Naive thymus-derived CD4-positive, alpha-beta T cell (primary cell): ENCODE measurements at regions of chr9 and their contacts with region 1.

Region 1: DNA sequence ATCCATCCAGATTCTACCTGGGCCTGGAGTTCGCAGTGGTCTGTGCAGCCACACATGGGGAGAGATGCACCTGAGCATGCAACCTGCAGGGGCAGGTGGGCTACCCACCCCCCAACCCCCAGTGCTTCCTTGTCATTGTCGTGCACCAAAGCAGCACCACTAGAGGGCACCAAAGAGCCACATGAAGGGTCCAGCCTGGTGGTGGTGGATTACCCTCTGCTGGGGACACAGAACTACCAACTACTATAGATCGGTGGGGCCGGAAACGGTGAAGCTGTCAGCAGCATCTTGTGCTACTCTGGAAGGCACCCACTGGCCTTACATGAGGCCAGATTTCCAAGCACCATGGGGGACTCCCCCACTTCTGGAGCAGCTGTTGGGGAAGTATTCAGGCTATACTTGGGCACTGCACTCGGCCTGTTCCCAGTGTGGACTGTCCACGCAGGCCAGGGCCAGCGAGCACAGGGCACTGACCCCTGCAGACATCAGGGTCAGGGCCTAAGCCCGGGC is 60.2 kb upstream of the TBC1D2 start:
- DNase-seq: peak; percentile 40 to 77 (median 65)
- ATAC-seq: peak; percentile 90
- H3K4me3 ChIP-seq: no peak overlapping the region
- H3K4me3 Mint-ChIP-seq: no peak overlapping the region
- H3K27ac ChIP-seq: no peak overlapping the region
- H3K27ac Mint-ChIP-seq: peak overlapping the region in 1 of 9 donors; percentile 7
- H3K4me1 ChIP-seq: no peaks in the 10 kb centered on the region
- H3K4me1 Mint-ChIP-seq: peaks cover 0 to 8% (median 0%) of the 10 kb centered on the region in 7 donors
- H3K27me3 ChIP-seq: no peaks in the 10 kb centered on the region
- H3K27me3 Mint-ChIP-seq: peaks cover 0 to 5% (median 0%) of the 10 kb centered on the region in 5 donors

Region 2: DNA sequence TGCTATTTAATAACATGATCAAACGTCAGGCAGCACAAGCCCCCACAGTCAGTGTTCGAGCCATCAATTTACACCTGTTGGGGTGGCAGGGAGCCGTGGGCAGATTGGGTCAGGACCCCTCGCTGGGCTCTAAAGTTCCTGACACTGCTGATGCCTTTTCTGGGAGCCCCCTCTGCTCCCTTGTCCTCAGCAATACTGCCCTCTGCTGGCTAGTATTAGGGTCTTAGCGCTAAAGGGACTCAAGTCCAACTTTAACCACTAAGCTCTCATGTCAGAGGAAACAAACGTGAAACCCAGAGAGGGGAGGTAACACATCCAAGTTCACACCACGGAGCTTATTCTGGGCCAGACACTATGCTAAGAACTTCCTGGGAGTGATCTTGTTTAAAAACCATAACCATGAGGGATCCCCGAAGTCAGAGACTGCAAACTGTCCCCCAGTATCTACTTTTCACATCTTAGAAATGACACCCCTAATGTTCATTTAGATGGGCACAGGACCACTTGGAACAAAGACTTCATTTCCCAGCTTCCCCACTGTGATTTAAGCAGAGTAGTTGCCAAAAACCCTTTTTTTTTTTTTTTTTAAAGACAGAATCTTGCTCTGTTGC is 460.3 kb after region 1 on chr9:
- CTCF ChIA-PET with region 1: interaction called, 6 read pairs
- POLR2A ChIA-PET with region 1: no interaction called
- intact Hi-C with region 1: loop called in 1 of 2 experiments (anchors 1 kb)
- DNase-seq: peak in 5 of 9 donors; percentile 9 to 31 (median 24)
- ATAC-seq: peak; percentile 53
- H3K4me3 ChIP-seq: no peak overlapping the region
- H3K4me3 Mint-ChIP-seq: no peak overlapping the region
- H3K27ac ChIP-seq: no peak overlapping the region
- H3K27ac Mint-ChIP-seq: no peak overlapping the region
- H3K4me1 ChIP-seq: no peaks in the 10 kb centered on the region
- H3K4me1 Mint-ChIP-seq: peaks cover 0 to 7% (median 0%) of the 10 kb centered on the region in 7 donors
- H3K27me3 ChIP-seq: no peaks in the 10 kb centered on the region
- H3K27me3 Mint-ChIP-seq: no peaks in the 10 kb centered on the region

Region 3: GRCh38 chr9:98791147-98792095 is 475.8 kb after region 1 on chr9:
- CTCF ChIA-PET with region 1: no interaction called
- POLR2A ChIA-PET with region 1: no interaction called
- intact Hi-C with region 1: loop called in 1 of 2 experiments (anchors 1 kb)
- DNase-seq: peak in 8 of 9 donors; percentile 24 to 74 (median 40)
- ATAC-seq: peak; percentile 88
- H3K4me3 ChIP-seq: no peak overlapping the region
- H3K4me3 Mint-ChIP-seq: peak overlapping the region in 2 of 10 donors; percentile 15 to 29
- H3K27ac ChIP-seq: no peak overlapping the region
- H3K27ac Mint-ChIP-seq: peak overlapping the region in 5 of 9 donors; percentile 5 to 56 (median 19)
- H3K4me1 ChIP-seq: peaks cover 6 to 16% of the 10 kb centered on the region in 2 donors
- H3K4me1 Mint-ChIP-seq: peaks cover 17 to 33% (median 30%) of the 10 kb centered on the region in 7 donors
- H3K27me3 ChIP-seq: no peaks in the 10 kb centered on the region
- H3K27me3 Mint-ChIP-seq: peaks cover 0 to 9% (median 0%) of the 10 kb centered on the region in 5 donors

Region 4: GRCh38 chr9:99336005-99336404 is 1020.4 kb after region 1 on chr9:
- CTCF ChIA-PET with region 1: no interaction called
- POLR2A ChIA-PET with region 1: no interaction called
- intact Hi-C with region 1: no loop called
- DNase-seq: no peak
- ATAC-seq: no peak
- H3K4me3 ChIP-seq: no peak overlapping the region
- H3K4me3 Mint-ChIP-seq: no peak overlapping the region
- H3K27ac ChIP-seq: no peak overlapping the region
- H3K27ac Mint-ChIP-seq: no peak overlapping the region
- H3K4me1 ChIP-seq: no peaks in the 10 kb centered on the region
- H3K4me1 Mint-ChIP-seq: no peaks in the 10 kb centered on the region
- H3K27me3 ChIP-seq: no peaks in the 10 kb centered on the region
- H3K27me3 Mint-ChIP-seq: peaks cover 0 to 16% (median 8%) of the 10 kb centered on the region in 5 donors